ENCODE measurements at regions of chr12 and their contacts with region 1.

Region 1: GRCh38 chr12:65602610-65603295 is 221.5 kb upstream of the HMGA2 start:
- DNase-seq: peak; percentile 68
- H3K4me3 ChIP-seq: peak overlapping the region; percentile 56
- CTCF ChIP-seq: peak; percentile 75

Region 2: DNA sequence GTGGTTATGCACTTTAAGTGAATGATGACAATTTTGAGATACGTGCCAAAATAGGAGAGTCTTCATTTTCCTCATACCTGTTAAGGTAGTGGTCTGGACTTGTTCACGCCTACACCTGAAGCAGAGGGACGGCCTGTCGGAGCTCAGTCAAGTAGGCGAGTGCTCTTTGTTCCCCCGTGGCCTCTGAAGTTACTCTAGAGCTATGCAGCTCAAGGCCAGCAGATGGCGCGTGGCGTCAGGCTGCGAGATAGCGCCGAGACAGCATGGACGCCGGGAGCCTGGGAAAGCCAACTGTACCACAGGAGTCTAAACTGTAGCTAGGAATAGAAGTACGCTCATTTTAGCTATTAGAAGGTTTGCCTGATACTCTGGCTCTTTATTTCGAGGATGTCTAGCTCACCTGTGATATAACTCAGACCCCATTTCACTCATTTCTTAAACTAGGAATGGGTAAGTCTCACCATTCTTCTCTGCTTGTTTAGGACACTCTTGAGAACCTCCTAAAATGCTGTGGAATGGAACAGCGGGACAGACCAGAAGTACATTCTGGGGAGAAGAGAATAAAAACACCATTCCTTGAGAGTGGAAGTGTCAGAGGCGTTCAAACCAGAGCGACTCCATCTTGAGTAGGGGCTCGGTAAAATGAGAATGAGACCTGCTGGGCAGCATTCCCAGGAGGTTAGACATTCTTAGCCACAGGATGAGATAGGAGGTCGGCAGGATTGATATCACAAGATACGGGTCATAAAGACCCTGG is 45.9 kb before region 1 on chr12:
- CTCF ChIA-PET with region 1: interaction called, 17 read pairs
- POLR2A ChIA-PET with region 1: no interaction called
- DNase-seq: no peak
- H3K4me3 ChIP-seq: no peak overlapping the region
- CTCF ChIP-seq: peak; percentile 93

Region 3: DNA sequence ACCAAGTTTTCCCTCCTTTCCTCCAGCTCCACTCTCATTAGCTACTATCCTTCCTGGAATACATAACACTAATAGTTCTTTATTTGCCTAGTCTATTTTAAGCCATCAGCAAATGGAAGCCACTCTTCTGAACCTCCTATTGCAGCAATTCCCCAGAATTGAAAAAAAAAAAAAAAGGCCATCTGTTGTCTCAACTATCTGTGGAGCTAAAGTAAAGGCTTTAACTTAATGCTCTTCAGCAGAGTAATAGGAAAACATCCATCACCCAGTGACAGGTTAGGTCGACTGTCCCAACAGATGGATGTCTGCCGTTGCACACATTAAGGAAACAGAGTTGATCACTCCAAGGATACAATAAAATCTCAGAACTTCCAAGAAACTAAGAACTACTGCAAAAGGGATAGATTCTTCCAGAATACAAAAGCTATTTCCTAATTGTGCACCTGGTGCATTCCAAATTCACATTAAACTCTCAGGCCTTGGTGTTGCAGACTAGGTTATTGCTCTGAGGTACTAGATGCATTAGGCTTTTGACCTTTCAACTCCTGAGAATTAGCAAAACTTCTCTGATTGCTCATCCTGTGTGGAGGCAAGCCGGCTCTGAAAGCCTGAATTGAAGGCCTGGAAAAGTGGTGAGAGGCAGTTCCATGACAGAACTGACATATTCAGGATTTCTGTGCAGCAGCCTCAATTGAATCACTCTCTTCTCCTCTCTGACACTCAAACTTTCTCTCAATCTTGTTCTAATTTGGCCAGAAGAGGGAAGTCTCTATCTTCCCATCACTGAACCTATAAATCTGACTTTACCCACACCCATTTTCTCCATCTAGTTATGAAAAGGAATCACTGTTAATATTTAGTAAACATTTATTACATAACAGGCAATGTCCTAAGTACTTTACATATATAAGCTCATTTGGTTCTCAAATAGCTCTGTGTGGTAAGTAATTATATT is 16.8 kb before region 1 on chr12:
- CTCF ChIA-PET with region 1: interaction called, 13 read pairs
- POLR2A ChIA-PET with region 1: no interaction called
- DNase-seq: no peak
- H3K4me3 ChIP-seq: no peak overlapping the region
- CTCF ChIP-seq: no peak

Region 4: DNA sequence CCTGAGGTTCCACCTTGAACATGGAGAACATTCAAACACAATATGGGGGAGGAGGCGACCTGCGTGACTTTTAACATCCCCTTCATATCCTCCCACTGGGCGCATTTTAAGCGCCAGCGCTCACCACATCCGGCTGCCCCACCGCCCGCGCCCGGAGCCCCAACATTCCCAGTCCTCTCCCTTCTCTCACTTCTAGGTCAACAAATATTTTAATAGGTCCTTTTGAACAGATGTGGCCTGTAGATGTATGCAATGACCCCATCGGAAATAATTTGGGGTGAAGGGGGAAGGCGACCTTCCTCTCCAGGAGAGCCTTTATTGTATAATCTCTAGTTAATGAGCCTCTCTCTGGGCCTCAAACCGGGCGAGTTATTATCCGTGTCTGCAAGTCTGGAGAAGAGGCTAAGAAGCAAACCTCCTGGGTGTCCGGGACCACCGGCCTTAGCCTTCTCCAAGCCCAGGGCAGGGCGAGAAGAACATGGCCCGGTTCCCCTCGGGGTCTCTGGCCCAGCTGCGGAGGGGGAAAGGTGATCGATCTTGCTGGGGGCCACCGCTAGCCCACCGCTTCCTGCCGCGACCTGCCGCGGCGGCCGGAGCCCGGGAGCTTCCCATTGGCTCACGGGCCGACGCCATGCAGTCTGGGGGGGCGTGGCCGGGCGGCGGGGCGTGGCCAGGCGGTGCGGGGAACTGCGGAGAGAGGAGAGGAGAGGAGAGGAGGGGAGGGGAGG is 138.3 kb after region 1 on chr12:
- CTCF ChIA-PET with region 1: no interaction called
- POLR2A ChIA-PET with region 1: interaction called, 14 read pairs
- DNase-seq: no peak
- H3K4me3 ChIP-seq: peak overlapping the region; percentile 76
- CTCF ChIP-seq: no peak

Region 5: DNA sequence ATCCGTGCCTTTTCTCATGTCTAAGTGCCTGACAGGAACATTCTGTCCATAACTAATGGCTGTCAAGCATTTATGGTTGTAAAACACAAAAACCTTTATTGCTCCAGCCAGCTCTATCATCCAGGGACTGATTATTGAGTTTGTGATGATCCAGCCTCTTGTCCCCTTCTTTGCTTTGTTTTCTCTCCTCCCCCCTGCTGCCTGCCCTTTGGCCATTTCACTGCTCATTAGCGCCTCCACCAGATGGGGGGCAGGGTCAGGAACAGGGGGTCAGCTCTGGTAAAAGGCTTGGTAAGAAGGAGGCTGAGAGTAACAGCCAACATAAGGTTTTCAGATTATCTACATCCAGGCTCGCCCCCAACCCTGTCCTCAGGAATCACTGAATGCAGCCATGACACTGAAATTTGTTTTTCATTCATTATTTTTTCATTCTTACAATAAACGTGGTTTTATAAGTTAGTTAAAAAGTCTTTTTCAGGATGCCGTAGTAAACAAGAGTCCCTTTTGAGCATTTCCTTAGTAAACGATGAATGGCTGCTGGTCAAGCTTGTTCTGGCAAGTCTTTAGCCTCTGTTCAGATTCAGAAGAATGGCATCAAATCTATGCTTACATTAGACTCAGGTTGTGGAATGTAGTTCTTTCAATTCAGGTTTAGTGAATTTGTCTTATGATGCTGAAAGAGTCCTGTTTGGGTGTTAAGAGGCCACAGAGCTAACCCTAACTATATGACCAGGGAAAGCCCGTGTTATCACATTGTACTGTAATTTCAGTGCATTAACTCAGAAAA is 243.2 kb after region 1 on chr12:
- CTCF ChIA-PET with region 1: no interaction called
- POLR2A ChIA-PET with region 1: no interaction called
- DNase-seq: no peak
- H3K4me3 ChIP-seq: no peak overlapping the region
- CTCF ChIP-seq: no peak